HepG2 (cell line): ENCODE measurements at regions of chr5 and their contacts with region 1.

Region 1: GRCh38 chr5:32531885-32532520 is 53.4 kb upstream of the SUB1 start:
- DNase-seq: peak; percentile 82
- ATAC-seq: peak; percentile 90
- H3K4me3 ChIP-seq: peak overlapping the region; percentile 31 to 58 (median 42); a peak in 5 of 6 replicates
- H3K27ac ChIP-seq: peak overlapping the region; percentile 82
- H3K4me1 ChIP-seq: peaks cover 83% of the 10 kb centered on the region
- H3K27me3 ChIP-seq: no peaks in the 10 kb centered on the region
- CTCF ChIP-seq: no peak
- EP300 ChIP-seq: no peak; a peak in 1 of 4 replicates
- POLR2A ChIP-seq: no peak; a peak in 1 of 4 replicates
- RAD21 ChIP-seq: no peak

Region 2: DNA sequence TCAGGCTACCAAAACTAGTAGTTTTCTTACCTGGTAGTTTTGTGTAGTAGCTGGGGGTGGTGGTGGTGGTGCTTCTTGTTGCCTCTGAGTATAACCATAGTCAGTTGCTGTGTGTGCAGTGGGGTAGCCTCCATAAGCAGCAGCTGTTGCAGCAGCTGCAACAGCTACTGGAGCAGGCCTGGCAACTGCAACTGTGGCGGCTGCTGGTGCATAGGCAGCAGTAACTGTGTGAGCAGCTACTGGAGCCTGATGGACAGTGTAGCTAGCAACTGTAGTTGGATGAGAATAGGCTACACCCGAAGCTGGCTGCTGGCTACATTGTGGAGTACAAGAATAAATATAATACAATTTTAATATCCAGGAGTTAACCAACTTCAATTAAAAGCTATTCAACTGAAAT is 112.2 kb before region 1 on chr5:
- CTCF ChIA-PET with region 1: no interaction called
- POLR2A ChIA-PET with region 1: no interaction called
- in situ Hi-C with region 1: no loop called
- intact Hi-C with region 1: no loop called
- DNase-seq: no peak
- ATAC-seq: peak; percentile 37; the same call in 2 of the 3 replicates
- H3K4me3 ChIP-seq: no peak overlapping the region
- H3K27ac ChIP-seq: no peak overlapping the region
- H3K4me1 ChIP-seq: no peaks in the 10 kb centered on the region
- H3K27me3 ChIP-seq: no peaks in the 10 kb centered on the region
- CTCF ChIP-seq: no peak
- EP300 ChIP-seq: no peak
- POLR2A ChIP-seq: no peak
- RAD21 ChIP-seq: no peak

Region 3: DNA sequence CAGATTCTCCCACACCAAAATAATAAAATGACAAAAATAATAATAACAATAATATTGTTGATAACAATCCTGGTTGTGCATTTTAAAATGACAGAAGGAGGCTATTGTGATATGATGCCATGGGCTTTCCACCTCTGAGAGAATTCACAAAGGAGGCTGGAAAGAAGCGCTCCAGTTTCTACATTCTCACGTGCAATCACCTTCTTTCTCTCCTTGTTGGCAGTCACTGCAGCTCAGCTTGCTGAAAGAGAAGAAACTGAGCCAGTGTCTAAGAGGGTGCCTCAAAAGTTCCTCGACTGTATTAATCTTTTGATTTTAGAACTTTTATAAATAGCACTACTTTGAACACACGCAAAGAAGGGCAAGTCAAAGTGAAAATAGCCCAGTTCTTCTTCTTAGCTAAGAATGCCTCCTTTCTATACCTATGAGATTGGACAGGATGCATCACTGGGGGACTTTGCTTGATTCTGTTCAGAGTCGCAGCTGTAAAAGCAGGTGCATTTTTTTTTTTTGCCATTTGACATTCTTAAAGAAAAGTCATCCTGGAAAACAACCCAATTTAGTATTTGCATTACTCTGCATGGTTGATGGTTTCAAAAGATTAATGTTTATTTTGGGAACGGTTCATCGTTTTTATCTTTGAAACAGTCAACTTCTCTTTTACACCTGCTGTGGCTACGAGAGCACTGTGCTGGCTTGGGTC is 40.9 kb after region 1 on chr5:
- CTCF ChIA-PET with region 1: no interaction called
- POLR2A ChIA-PET with region 1: interaction called, 20 read pairs
- in situ Hi-C with region 1: no loop called
- intact Hi-C with region 1: loop called (anchors 1 kb)
- DNase-seq: no peak
- ATAC-seq: no peak
- H3K4me3 ChIP-seq: no peak overlapping the region
- H3K27ac ChIP-seq: peak overlapping the region; percentile 99
- H3K4me1 ChIP-seq: peaks cover 52% of the 10 kb centered on the region
- H3K27me3 ChIP-seq: no peaks in the 10 kb centered on the region
- CTCF ChIP-seq: no peak
- EP300 ChIP-seq: no peak
- POLR2A ChIP-seq: no peak
- RAD21 ChIP-seq: no peak